HCT116 (cell line): ENCODE measurements at regions of chr11 and their contacts with region 1.

Region 1: DNA sequence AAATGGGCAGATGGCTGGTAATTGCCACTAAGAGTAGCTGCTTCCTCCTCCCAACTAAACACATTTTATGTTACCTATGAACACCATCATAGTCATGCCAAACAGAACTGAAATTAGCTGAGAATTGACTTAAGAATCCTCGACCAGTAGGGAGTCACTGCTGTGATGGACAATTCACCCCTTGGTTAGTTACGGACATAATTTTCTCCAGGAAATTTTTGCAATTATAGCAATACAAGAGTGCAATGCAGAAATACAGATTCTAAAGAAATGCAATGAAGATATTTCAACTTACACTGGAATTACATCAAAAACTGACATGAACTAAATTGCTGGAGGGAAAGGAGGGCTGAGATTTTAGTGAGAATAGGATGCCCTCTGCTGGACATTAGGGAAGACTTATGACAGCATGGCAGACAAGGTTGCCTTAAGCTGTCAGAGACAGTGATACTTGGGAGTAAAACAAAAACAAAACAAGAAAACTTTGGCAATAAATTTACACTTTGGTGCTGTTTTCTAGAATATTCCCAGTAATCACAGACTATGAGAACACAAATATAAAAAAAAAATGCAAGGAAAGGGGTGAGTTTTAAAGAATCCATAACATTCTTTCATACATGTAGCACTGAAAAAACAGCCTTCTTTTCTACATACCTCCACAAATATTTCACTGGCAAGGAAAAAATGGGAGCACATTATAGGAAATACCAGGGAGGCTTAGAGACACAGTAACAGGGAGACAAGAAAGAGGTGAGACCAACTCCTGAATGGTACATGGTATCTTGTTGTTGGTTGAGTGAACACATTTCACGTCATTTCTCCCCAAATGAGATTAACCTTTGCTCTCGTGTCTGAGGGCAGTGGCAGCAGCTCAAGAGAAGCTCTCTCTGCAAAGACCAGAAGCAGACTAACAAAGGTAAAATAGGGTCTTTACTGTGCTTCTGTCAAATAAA is 11.2 kb upstream of the PPP2R1B start:
- DNase-seq: peak; percentile 53
- ATAC-seq: peak; percentile 95
- H3K4me3 ChIP-seq: no peak overlapping the region
- H3K27ac ChIP-seq: no peak overlapping the region
- H3K4me1 ChIP-seq: no peaks in the 10 kb centered on the region
- H3K27me3 ChIP-seq: no peaks in the 10 kb centered on the region
- CTCF ChIP-seq: peak; percentile 68 to 93 (median 82)
- POLR2A ChIP-seq: no peak
- RAD21 ChIP-seq: peak; percentile 95

Region 2: DNA sequence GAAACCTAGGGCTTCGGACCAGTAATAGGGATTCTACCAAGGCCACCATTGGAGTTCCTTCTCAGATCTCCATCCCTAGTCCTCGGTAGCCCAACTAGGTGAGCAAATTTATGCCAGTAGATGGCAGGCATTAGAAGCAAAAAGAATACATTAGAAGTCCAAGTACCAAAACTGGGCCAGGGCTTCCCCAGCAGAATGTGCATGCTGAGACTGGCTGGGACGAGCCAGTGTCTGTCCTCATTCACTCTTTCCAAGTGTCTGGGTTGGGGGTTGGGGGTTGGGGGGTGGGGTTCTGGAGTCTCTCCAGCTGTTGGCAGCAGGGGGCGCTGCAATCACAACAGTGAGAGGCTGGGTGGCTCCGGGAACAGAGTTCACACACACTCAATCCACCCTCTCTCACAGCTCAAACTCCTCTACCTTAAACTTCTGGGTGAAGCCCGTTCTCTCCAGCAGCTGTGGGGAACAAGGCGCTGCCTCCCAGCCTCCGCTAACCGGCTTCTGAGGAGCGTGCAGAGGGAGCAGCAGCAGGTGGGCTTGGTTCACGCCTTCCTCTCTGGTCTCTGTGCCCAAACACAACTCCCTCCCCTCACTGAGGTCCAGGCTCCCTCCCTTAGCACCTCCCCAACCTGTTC is 322.7 kb before region 1 on chr11:
- CTCF ChIA-PET with region 1: interaction called, 3 read pairs
- POLR2A ChIA-PET with region 1: no interaction called
- RAD21 ChIA-PET with region 1: no interaction called
- intact Hi-C with region 1: loop called (anchors 1 kb)
- DNase-seq: no peak
- ATAC-seq: peak; percentile 85
- H3K4me3 ChIP-seq: no peak overlapping the region
- H3K27ac ChIP-seq: no peak overlapping the region
- H3K4me1 ChIP-seq: no peaks in the 10 kb centered on the region
- H3K27me3 ChIP-seq: peaks cover 5% of the 10 kb centered on the region; the same call in 1 of the 2 replicates
- CTCF ChIP-seq: peak in 2 of 3 experiments; percentile 32 to 48; a peak in 4 of 6 replicates
- POLR2A ChIP-seq: no peak
- RAD21 ChIP-seq: peak; percentile 60

Region 3: DNA sequence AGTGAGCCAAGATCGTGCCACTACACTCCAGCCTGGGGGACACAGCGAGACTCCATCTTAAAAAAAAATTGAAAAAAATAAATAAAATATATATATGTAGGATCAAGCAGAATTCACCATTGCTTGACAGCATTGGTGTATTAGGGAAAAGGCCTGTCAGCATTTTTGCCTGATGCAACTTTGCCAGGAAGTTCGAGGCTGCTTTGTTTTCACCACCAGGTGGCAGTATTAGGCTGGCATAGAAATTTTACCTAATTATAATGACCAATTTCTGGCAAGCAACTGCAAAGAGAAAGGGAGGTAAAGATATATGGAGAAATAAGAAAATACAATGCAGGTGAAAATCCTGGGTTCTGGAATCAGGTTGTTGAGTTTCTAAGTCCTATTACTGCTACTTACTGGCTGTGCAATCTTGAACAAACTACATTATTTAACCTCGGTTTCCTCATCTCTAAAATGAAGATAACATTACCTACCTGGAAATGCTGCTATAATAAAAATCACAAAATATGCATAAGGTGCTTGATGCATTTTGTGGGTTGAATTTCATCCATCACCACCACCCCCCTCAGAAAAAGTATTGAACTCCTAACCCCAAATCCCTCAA is 212.2 kb before region 1 on chr11:
- CTCF ChIA-PET with region 1: interaction called, 7 read pairs
- POLR2A ChIA-PET with region 1: no interaction called
- RAD21 ChIA-PET with region 1: no interaction called
- intact Hi-C with region 1: loop called (anchors 1 kb)
- DNase-seq: peak; percentile 63
- ATAC-seq: peak; percentile 70
- H3K4me3 ChIP-seq: no peak overlapping the region
- H3K27ac ChIP-seq: no peak overlapping the region
- H3K4me1 ChIP-seq: peaks cover 0 to 7% of the 10 kb centered on the region in 2 experiments; a peak in 1 of 4 replicates
- H3K27me3 ChIP-seq: no peaks in the 10 kb centered on the region
- CTCF ChIP-seq: peak; percentile 81 to 87 (median 84)
- POLR2A ChIP-seq: no peak
- RAD21 ChIP-seq: peak; percentile 91

Region 4: DNA sequence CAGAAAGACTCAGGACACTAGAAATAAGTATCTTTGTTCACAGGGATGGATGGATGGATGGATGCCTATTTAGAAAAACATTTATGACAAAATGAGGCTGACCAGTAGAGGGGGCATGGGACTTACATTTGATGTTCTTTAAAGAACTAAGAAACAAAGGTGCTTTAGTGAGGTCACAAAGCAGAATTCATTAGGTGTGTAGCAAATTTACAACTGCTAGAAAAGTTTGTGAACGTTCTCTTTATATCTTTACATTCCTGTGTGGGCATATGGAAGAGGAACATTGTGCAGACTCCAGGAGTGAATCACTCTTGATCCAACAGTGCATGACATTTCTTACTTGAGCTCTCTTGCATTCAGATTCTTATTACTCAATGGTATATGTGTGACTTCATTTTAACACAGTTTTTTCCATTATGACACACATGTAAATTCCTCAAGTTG is 191.0 kb before region 1 on chr11:
- CTCF ChIA-PET with region 1: interaction called, 31 read pairs
- POLR2A ChIA-PET with region 1: no interaction called
- RAD21 ChIA-PET with region 1: interaction called in 1 of 2 experiments, 4 read pairs
- intact Hi-C with region 1: loop called (anchors 1 kb)
- DNase-seq: peak; percentile 55
- ATAC-seq: peak; percentile 81
- H3K4me3 ChIP-seq: no peak overlapping the region
- H3K27ac ChIP-seq: no peak overlapping the region
- H3K4me1 ChIP-seq: no peaks in the 10 kb centered on the region
- H3K27me3 ChIP-seq: no peaks in the 10 kb centered on the region
- CTCF ChIP-seq: peak; percentile 58 to 82 (median 72); a peak in 5 of 6 replicates
- POLR2A ChIP-seq: no peak
- RAD21 ChIP-seq: peak; percentile 87

Region 5: GRCh38 chr11:111601979-111602864 is 175.1 kb before region 1 on chr11 and contains the start of gene SIK2:
- CTCF ChIA-PET with region 1: interaction called, 17 read pairs
- POLR2A ChIA-PET with region 1: interaction called, 4 read pairs
- RAD21 ChIA-PET with region 1: interaction called in 1 of 2 experiments, 3 read pairs
- intact Hi-C with region 1: loop called (anchors 1 kb)
- DNase-seq: peak; percentile 87
- ATAC-seq: peak; percentile 88
- H3K4me3 ChIP-seq: peak within 1 kb of the TSS; percentile 73 to 76
- H3K27ac ChIP-seq: peak within 1 kb of the TSS; percentile 72; the same call in 1 of the 2 replicates
- H3K4me1 ChIP-seq: peaks cover 9 to 27% of the 10 kb centered on the region in 2 experiments; a peak in 3 of 4 replicates
- H3K27me3 ChIP-seq: no peaks in the 10 kb centered on the region
- CTCF ChIP-seq: peak; percentile 72 to 94 (median 83)
- POLR2A ChIP-seq: no peak
- RAD21 ChIP-seq: peak; percentile 100
- total RNA-seq, gene SIK2: 13.0 TPM

Region 6: GRCh38 chr11:111766093-111766833 is 11.1 kb before region 1 on chr11 and contains the start of gene PPP2R1B:
- CTCF ChIA-PET with region 1: interaction called, 27 read pairs
- POLR2A ChIA-PET with region 1: no interaction called
- RAD21 ChIA-PET with region 1: no interaction called
- intact Hi-C with region 1: no loop called
- DNase-seq: peak; percentile 23
- ATAC-seq: peak; percentile 97
- H3K4me3 ChIP-seq: peak within 1 kb of the TSS; percentile 87 to 91
- H3K27ac ChIP-seq: peak within 1 kb of the TSS; percentile 49
- H3K4me1 ChIP-seq: peaks cover 5 to 21% of the 10 kb centered on the region in 2 experiments
- H3K27me3 ChIP-seq: no peaks in the 10 kb centered on the region
- CTCF ChIP-seq: no peak
- POLR2A ChIP-seq: peak; percentile 76
- RAD21 ChIP-seq: no peak
- total RNA-seq, gene PPP2R1B: 24.9 TPM

Region 7: DNA sequence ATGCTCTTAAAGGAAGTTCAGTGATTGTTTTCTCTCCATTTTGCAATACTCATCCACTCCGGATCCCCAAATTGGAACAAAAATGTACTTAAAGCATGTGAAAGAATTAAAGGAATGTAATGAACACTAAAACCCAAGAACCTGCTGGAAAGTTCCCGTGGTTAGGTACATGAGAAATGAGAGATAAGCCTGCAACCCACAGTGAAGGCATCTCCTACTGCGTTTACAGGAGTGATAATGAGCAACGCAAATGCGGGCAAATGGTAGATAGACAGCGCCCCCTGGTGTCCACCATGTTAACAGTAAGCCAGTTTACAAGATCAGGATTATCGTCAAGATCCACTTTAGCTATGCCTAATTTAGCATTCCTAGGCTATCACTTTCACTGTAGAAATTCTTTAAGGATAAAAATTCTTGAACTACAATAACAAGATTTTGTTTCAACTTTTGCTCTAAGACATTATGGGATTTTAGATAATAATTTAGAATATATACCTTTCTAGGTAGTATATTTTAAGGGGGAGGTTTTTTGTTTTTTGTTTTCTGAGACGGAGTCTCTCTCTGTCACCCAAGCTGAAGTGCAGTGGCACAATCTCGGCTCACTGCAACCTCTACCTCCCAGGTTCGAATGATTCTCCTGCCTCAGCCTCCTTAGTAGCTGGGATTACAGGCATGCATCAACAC is 64.1 kb after region 1 on chr11:
- CTCF ChIA-PET with region 1: interaction called, 3 read pairs
- POLR2A ChIA-PET with region 1: no interaction called
- RAD21 ChIA-PET with region 1: no interaction called
- intact Hi-C with region 1: loop called (anchors 5 kb)
- DNase-seq: peak; percentile 64
- ATAC-seq: peak; percentile 97
- H3K4me3 ChIP-seq: no peak overlapping the region
- H3K27ac ChIP-seq: no peak overlapping the region
- H3K4me1 ChIP-seq: 0 out of 4 replicates have a peak, but pooled peaks cover 0 to 2% of the 10 kb centered on the region in 2 experiments
- H3K27me3 ChIP-seq: no peaks in the 10 kb centered on the region
- CTCF ChIP-seq: peak; percentile 78 to 93 (median 83)
- POLR2A ChIP-seq: no peak
- RAD21 ChIP-seq: peak; percentile 90

Region 8: GRCh38 chr11:111938687-111939160 is 161.4 kb after region 1 on chr11:
- CTCF ChIA-PET with region 1: no interaction called
- POLR2A ChIA-PET with region 1: no interaction called
- RAD21 ChIA-PET with region 1: no interaction called
- intact Hi-C with region 1: no loop called
- DNase-seq: no peak
- ATAC-seq: no peak
- H3K4me3 ChIP-seq: no peak overlapping the region
- H3K27ac ChIP-seq: no peak overlapping the region
- H3K4me1 ChIP-seq: peaks cover 20 to 29% of the 10 kb centered on the region in 2 experiments; a peak in 3 of 4 replicates
- H3K27me3 ChIP-seq: no peaks in the 10 kb centered on the region
- CTCF ChIP-seq: no peak
- POLR2A ChIP-seq: no peak
- RAD21 ChIP-seq: no peak